ENCODE measurements at regions of chr6 and their contacts with region 1.

Region 1: GRCh38 chr6:158422629-158423238 is 110.5 kb downstream of the TULP4 start:
- DNase-seq: no peak
- H3K4me3 ChIP-seq: no peak overlapping the region
- H3K27ac ChIP-seq: no peak overlapping the region
- H3K4me1 ChIP-seq: peaks cover 3% of the 10 kb centered on the region
- H3K27me3 ChIP-seq: no peaks in the 10 kb centered on the region
- CTCF ChIP-seq: no peak

Region 2: GRCh38 chr6:158468666-158469065 is 45.9 kb after region 1 on chr6:
- CTCF ChIA-PET with region 1: interaction called, 10 read pairs
- POLR2A ChIA-PET with region 1: no interaction called
- intact Hi-C with region 1: no loop called
- DNase-seq: peak; percentile 62
- H3K4me3 ChIP-seq: no peak overlapping the region
- H3K27ac ChIP-seq: no peak overlapping the region
- H3K4me1 ChIP-seq: peaks cover 34% of the 10 kb centered on the region
- H3K27me3 ChIP-seq: no peaks in the 10 kb centered on the region
- CTCF ChIP-seq: peak; percentile 46